ENCODE measurements at regions of chr17 and their contacts with region 1.

Region 1: GRCh38 chr17:29389982-29390850 is at the start of gene TAOK1:
- DNase-seq: peak; percentile 88
- ATAC-seq: peak; percentile 94
- H3K4me3 ChIP-seq: peak within 1 kb of the TSS; percentile 96
- H3K27ac ChIP-seq: peak within 1 kb of the TSS; percentile 93
- H3K4me1 ChIP-seq: no peaks in the 10 kb centered on the region
- H3K27me3 ChIP-seq: no peaks in the 10 kb centered on the region
- CTCF ChIP-seq: no peak
- EP300 ChIP-seq: no peak
- POLR2A ChIP-seq: peak; percentile 98
- RAD21 ChIP-seq: no peak
- polyA plus RNA-seq, gene TAOK1: 2.4 to 3.4 TPM

Region 2: DNA sequence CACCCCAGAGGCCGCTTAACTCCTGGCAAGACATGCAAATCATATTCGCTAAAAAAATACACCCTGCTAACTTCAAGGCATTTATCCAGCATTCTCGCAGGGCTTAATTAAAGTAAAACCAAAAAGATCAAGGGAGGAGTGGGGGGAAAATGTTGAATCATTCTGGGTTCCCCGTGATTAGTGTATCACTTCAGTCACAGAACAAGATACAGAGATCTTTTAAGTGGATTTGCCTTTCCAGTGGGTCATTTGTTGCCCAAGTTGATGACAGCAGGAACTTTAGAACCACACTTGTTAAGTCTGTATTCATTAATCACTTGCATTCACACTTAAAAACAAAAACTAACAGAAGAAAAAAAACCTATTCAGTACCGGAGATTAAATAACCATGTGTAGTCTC is 126.3 kb before region 1 on chr17:
- CTCF ChIA-PET with region 1: no interaction called
- POLR2A ChIA-PET with region 1: no interaction called
- RAD21 ChIA-PET with region 1: no interaction called
- SMC1A ChIA-PET with region 1: no interaction called
- in situ Hi-C with region 1: no loop called
- intact Hi-C with region 1: no loop called
- DNase-seq: no peak
- ATAC-seq: no peak
- H3K4me3 ChIP-seq: no peak overlapping the region
- H3K27ac ChIP-seq: no peak overlapping the region
- H3K4me1 ChIP-seq: no peaks in the 10 kb centered on the region
- H3K27me3 ChIP-seq: no peaks in the 10 kb centered on the region
- CTCF ChIP-seq: no peak
- EP300 ChIP-seq: no peak
- POLR2A ChIP-seq: no peak
- RAD21 ChIP-seq: no peak

Region 3: GRCh38 chr17:29514792-29515191 is 124.6 kb after region 1 on chr17:
- CTCF ChIA-PET with region 1: no interaction called
- POLR2A ChIA-PET with region 1: no interaction called
- RAD21 ChIA-PET with region 1: no interaction called
- SMC1A ChIA-PET with region 1: no interaction called
- in situ Hi-C with region 1: no loop called
- intact Hi-C with region 1: loop called (anchors 10 kb)
- DNase-seq: no peak
- ATAC-seq: no peak
- H3K4me3 ChIP-seq: no peak overlapping the region
- H3K27ac ChIP-seq: no peak overlapping the region
- H3K4me1 ChIP-seq: no peaks in the 10 kb centered on the region
- H3K27me3 ChIP-seq: no peaks in the 10 kb centered on the region
- CTCF ChIP-seq: no peak
- EP300 ChIP-seq: no peak
- POLR2A ChIP-seq: no peak
- RAD21 ChIP-seq: no peak